SK-N-SH (cell line): ENCODE measurements at regions of chr18 and their contacts with region 1.

Region 1: GRCh38 chr18:830315-830901 is 18.4 kb upstream of the YES1 start:
- DNase-seq: no peak
- H3K4me3 ChIP-seq: no peak overlapping the region
- H3K27ac ChIP-seq: no peak overlapping the region
- H3K4me1 ChIP-seq: peaks cover 3 to 4% of the 10 kb centered on the region in 2 experiments; a peak in 2 of 4 replicates
- H3K27me3 ChIP-seq: peaks cover 5% of the 10 kb centered on the region; the same call in 1 of the 2 replicates
- CTCF ChIP-seq: no peak
- EP300 ChIP-seq: no peak
- RAD21 ChIP-seq: no peak

Region 2: GRCh38 chr18:616380-616995 is 213.9 kb before region 1 on chr18:
- CTCF ChIA-PET with region 1: interaction called, 12 read pairs
- POLR2A ChIA-PET with region 1: interaction called, 3 read pairs
- DNase-seq: peak; percentile 44
- H3K4me3 ChIP-seq: no peak overlapping the region
- H3K27ac ChIP-seq: no peak overlapping the region
- H3K4me1 ChIP-seq: no peaks in the 10 kb centered on the region; a peak in 1 of 4 replicates
- H3K27me3 ChIP-seq: peaks cover 16% of the 10 kb centered on the region; the same call in 1 of the 2 replicates
- CTCF ChIP-seq: peak; percentile 91
- EP300 ChIP-seq: no peak
- RAD21 ChIP-seq: peak; percentile 92

Region 3: DNA sequence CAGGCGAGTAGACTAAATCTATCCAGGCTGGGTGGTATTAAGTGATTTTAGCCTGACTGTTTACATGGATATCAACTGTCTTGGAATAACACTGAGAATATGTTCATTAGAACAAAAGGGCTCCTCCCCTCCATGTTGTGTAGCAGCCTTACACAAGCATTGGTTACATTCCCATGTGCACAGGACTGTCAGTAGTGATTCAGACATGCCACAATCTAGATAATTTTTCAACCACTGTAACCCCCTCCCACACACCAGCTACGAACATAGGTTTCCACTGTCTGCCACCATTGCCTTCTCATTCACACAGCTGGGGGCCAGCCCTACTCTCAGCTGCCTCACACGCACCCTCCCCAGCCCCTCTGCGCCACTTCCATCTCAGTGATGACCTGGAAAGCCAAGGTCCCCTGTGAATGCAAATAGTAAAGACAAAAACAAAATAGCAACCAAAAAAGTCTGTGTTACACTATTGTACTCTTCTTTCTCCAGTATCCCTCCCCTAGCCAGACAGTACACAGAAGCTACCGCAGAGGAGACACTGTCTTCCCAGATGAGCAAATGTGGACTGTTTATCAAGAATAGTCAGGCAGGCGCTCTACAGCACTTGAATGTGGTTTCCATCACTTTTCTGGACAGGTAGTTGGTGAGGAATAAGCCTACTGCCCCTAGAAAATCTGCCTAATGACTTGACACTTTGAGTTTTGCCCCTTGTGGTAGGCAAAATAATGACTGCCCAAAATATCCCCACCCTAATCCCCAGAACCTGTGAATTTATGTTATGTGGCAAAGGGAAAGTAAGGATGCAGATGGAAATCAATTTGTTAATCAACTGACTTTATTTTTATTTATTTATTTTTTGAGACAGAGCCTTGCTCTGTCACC is 200.9 kb before region 1 on chr18:
- CTCF ChIA-PET with region 1: interaction called, 149 read pairs
- POLR2A ChIA-PET with region 1: interaction called, 3 read pairs
- DNase-seq: no peak
- H3K4me3 ChIP-seq: no peak overlapping the region
- H3K27ac ChIP-seq: no peak overlapping the region
- H3K4me1 ChIP-seq: no peaks in the 10 kb centered on the region
- H3K27me3 ChIP-seq: no peaks in the 10 kb centered on the region; the same call in 1 of the 2 replicates
- CTCF ChIP-seq: peak; percentile 20; the same call in 1 of the 2 replicates
- EP300 ChIP-seq: no peak
- RAD21 ChIP-seq: no peak

Region 4: GRCh38 chr18:712401-713134 is 117.8 kb before region 1 on chr18 and contains the start of gene ENOSF1:
- CTCF ChIA-PET with region 1: interaction called, 10 read pairs
- POLR2A ChIA-PET with region 1: no interaction called
- DNase-seq: peak; percentile 92
- H3K4me3 ChIP-seq: peak within 1 kb of the TSS; percentile 67 to 68
- H3K27ac ChIP-seq: peak within 1 kb of the TSS in 1 of 2 experiments; percentile 47; a peak in 1 of 4 replicates
- H3K4me1 ChIP-seq: peaks cover 0 to 7% of the 10 kb centered on the region in 2 experiments; a peak in 1 of 4 replicates
- H3K27me3 ChIP-seq: no peaks in the 10 kb centered on the region
- CTCF ChIP-seq: peak; percentile 55
- EP300 ChIP-seq: no peak
- RAD21 ChIP-seq: no peak; the same call in 1 of the 2 replicates
- polyA plus RNA-seq, gene ENOSF1: 23.3 and 25.9 TPM in 2 replicates

Region 5: DNA sequence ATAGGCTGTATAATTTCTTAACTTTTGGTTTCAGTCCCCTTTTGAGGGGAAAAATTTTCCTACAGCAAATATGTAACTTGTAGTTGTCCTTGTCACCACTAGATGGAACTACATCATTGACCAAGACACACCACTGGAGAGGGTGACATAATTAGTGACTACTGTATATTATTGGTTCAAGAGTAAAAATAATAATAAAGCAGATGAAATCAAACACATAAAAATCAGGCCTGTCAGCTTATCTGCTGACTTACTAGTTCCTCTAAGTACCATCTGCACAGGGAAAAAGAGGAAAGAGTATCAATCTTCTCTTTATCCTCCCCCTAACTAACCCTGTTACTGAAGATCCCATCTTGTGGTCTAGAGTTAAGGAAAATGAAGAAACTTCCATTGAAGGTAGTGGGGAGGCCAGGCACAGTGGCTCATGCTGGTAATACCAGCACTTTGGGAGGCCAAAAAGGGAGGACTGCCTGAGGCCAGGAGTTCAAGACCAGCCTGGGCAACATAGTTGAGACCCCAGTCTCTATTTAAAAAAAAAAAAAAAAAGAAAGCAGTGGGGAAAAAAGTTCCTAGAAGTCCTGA is 88.4 kb before region 1 on chr18:
- CTCF ChIA-PET with region 1: interaction called, 119 read pairs
- POLR2A ChIA-PET with region 1: no interaction called
- DNase-seq: peak; percentile 61
- H3K4me3 ChIP-seq: peak overlapping the region in 1 of 2 experiments; percentile 9; a peak in 1 of 4 replicates
- H3K27ac ChIP-seq: no peak overlapping the region
- H3K4me1 ChIP-seq: no peaks in the 10 kb centered on the region; a peak in 1 of 4 replicates
- H3K27me3 ChIP-seq: no peaks in the 10 kb centered on the region
- CTCF ChIP-seq: peak; percentile 82
- EP300 ChIP-seq: no peak
- RAD21 ChIP-seq: peak; percentile 83

Region 6: GRCh38 chr18:812376-813171 is 17.8 kb before region 1 on chr18:
- CTCF ChIA-PET with region 1: interaction called, 16 read pairs
- POLR2A ChIA-PET with region 1: interaction called, 4 read pairs
- DNase-seq: peak; percentile 89
- H3K4me3 ChIP-seq: peak overlapping the region; percentile 76 to 89
- H3K27ac ChIP-seq: peak overlapping the region; percentile 57 to 79
- H3K4me1 ChIP-seq: no peaks in the 10 kb centered on the region; a peak in 2 of 4 replicates
- H3K27me3 ChIP-seq: 0 out of 2 replicates have a peak, but pooled peaks cover 7% of the 10 kb centered on the region
- CTCF ChIP-seq: no peak
- EP300 ChIP-seq: no peak
- RAD21 ChIP-seq: no peak